Body of pancreas (tissue), 4 donors: ENCODE measurements at regions of chr9 and their contacts with region 1.

Region 1: DNA sequence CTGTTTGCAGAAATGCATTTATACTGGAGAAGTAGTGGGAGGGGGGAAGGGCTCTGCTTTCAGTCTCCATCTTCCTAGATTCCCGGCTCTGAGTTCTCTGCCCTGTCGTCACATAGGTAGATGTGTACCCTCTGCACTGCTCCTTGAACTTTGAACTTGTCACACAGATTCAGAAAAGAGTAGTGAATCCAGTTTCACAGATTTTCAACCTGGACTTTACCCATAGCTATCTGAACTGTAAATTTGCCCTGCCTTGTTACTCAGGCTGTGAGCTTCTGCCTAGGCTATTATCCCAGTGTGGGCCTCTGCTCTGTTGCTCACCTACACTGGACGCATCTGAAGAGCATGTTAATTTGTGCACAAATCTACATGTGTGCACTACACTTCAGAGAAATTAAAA is 12.8 kb upstream of the C9orf152 start:
- DNase-seq: no peak
- ATAC-seq: no peak
- H3K4me3 ChIP-seq: no peak overlapping the region
- H3K27ac ChIP-seq: no peak overlapping the region
- H3K4me1 ChIP-seq: peaks cover 10% of the 10 kb centered on the region
- H3K27me3 ChIP-seq: no peaks in the 10 kb centered on the region
- CTCF ChIP-seq: no peak
- POLR2A ChIP-seq: no peak

Region 2: GRCh38 chr9:110179734-110180133 is 41.1 kb before region 1 on chr9:
- intact Hi-C with region 1: loop called (anchors 10 kb)
- DNase-seq: no peak
- ATAC-seq: no peak
- H3K4me3 ChIP-seq: no peak overlapping the region
- H3K27ac ChIP-seq: no peak overlapping the region
- H3K4me1 ChIP-seq: peaks cover 19% of the 10 kb centered on the region
- H3K27me3 ChIP-seq: no peaks in the 10 kb centered on the region
- CTCF ChIP-seq: no peak
- POLR2A ChIP-seq: no peak